Posterior vena cava (tissue), 2 donors: ENCODE measurements at regions of chr11 and their contacts with region 1.

Region 1: GRCh38 chr11:78898266-78898775 is 323.7 kb upstream of the NARS2 start:
- DNase-seq: no peak

Region 2: DNA sequence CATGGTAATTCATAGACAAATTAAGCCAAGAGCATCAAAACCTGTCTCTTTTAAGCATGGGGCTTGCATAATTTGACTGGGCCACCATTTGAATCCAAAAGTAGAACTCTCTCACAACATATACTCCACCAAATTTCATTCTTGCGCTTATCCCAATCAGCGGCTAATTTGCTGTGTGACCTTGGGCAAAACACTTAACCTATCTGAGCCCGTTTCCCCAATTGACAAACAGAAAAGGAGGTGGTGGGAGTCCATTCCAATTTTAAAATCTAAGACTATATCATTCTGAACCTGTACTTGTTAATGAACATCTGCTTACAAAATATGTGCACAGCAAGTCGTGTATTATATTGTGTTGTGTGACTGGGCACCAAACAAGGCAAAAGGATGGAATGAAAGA is 14.5 kb after region 1 on chr11:
- intact Hi-C with region 1: loop called in 1 of 2 experiments (anchors 1 kb)
- DNase-seq: no peak